PC-9 (cell line): ENCODE measurements at regions of chr1 and their contacts with region 1.

Region 1: GRCh38 chr1:166875734-166876539 is at the start of gene TADA1:
- DNase-seq: peak; percentile 91 to 96
- H3K4me3 ChIP-seq: peak within 1 kb of the TSS; percentile 87
- H3K27ac ChIP-seq: peak within 1 kb of the TSS; percentile 76
- H3K4me1 ChIP-seq: peaks cover 20% of the 10 kb centered on the region
- H3K27me3 ChIP-seq: no peaks in the 10 kb centered on the region
- CTCF ChIP-seq: no peak
- total RNA-seq, gene TADA1: 5.2 and 5.6 TPM in 2 replicates

Region 2: GRCh38 chr1:166838766-166839599 is 37.0 kb before region 1 on chr1 and contains the start of gene POGK:
- CTCF ChIA-PET with region 1: interaction called, 3 read pairs
- POLR2A ChIA-PET with region 1: interaction called, 4 read pairs
- intact Hi-C with region 1: loop called (anchors 2 kb)
- DNase-seq: peak; percentile 70 to 88
- H3K4me3 ChIP-seq: peak within 1 kb of the TSS; percentile 74
- H3K27ac ChIP-seq: peak within 1 kb of the TSS; percentile 35
- H3K4me1 ChIP-seq: peaks cover 7% of the 10 kb centered on the region
- H3K27me3 ChIP-seq: peaks cover 6% of the 10 kb centered on the region
- CTCF ChIP-seq: no peak
- total RNA-seq, gene POGK: 17.0 and 18.8 TPM in 2 replicates

Region 3: GRCh38 chr1:166902271-166902670 is 26.3 kb after region 1 on chr1:
- CTCF ChIA-PET with region 1: no interaction called
- POLR2A ChIA-PET with region 1: no interaction called
- intact Hi-C with region 1: loop called (anchors 1 kb)
- DNase-seq: peak in 1 of 2 experiments; percentile 47
- H3K4me3 ChIP-seq: no peak overlapping the region
- H3K27ac ChIP-seq: no peak overlapping the region
- H3K4me1 ChIP-seq: peaks cover 18% of the 10 kb centered on the region
- H3K27me3 ChIP-seq: no peaks in the 10 kb centered on the region
- CTCF ChIP-seq: no peak

Region 4: GRCh38 chr1:167578939-167579521 is 703.1 kb after region 1 on chr1:
- CTCF ChIA-PET with region 1: no interaction called
- POLR2A ChIA-PET with region 1: no interaction called
- intact Hi-C with region 1: no loop called
- DNase-seq: no peak
- H3K4me3 ChIP-seq: no peak overlapping the region
- H3K27ac ChIP-seq: no peak overlapping the region
- H3K4me1 ChIP-seq: no peaks in the 10 kb centered on the region
- H3K27me3 ChIP-seq: peaks cover 16% of the 10 kb centered on the region; the same call in 1 of the 2 replicates
- CTCF ChIP-seq: no peak